CD8-positive, alpha-beta memory T cell (primary cell): ENCODE measurements at regions of chr16 and their contacts with region 1.

Region 1: DNA sequence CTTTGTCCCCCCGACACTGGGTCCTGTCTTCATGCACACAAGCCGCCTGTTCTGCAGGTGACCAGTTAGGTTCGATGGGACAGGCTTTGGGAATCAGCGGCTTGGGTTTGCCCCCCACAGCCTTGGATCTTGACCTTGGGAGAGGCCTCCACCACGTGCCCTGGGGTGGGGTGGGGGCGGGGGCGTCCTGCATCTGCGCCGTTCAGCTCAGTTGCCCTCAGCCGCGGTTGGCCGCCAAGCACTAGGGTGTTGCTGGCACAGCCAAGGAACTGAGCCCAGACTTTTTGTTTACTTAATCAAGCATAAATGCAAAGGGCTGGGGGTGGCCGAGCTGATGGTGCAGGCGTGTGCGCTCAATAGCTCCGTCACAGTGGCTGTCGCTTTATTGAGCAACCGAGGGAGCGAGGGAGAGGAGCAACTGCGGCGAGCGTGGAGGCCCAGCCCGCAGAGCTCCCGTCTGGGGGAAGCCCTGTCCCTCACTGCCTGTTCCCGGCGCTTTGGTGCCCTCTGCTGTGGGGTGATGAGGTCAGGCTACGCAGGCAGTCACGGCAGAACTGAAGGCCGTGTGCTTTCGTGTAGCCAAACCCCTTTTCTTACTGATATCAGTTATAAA is 33.9 kb downstream of the JPH3 start:
- DNase-seq: peak; percentile 70 to 86 (median 74)
- H3K4me3 ChIP-seq: peak overlapping the region; percentile 61
- H3K4me3 Mint-ChIP-seq: peak overlapping the region; percentile 69 to 92 (median 88)
- H3K27ac ChIP-seq: no peak overlapping the region
- H3K27ac Mint-ChIP-seq: peak overlapping the region; percentile 61 to 98 (median 85)
- H3K4me1 ChIP-seq: peaks cover 18% of the 10 kb centered on the region
- H3K4me1 Mint-ChIP-seq: peaks cover 9 to 19% (median 15%) of the 10 kb centered on the region in 3 donors
- H3K27me3 ChIP-seq: no peaks in the 10 kb centered on the region
- H3K27me3 Mint-ChIP-seq: peaks cover 8 to 11% of the 10 kb centered on the region in 2 donors

Region 2: GRCh38 chr16:86563489-86564345 is 1072.5 kb before region 1 on chr16:
- CTCF ChIA-PET with region 1: interaction called, 10 read pairs
- POLR2A ChIA-PET with region 1: no interaction called
- DNase-seq: peak; percentile 77 to 89 (median 80)
- H3K4me3 ChIP-seq: peak overlapping the region; percentile 24
- H3K4me3 Mint-ChIP-seq: peak overlapping the region; percentile 31 to 85 (median 70)
- H3K27ac ChIP-seq: no peak overlapping the region
- H3K27ac Mint-ChIP-seq: peak overlapping the region in 3 of 8 donors; percentile 28 to 76 (median 44)
- H3K4me1 ChIP-seq: peaks cover 11% of the 10 kb centered on the region
- H3K4me1 Mint-ChIP-seq: peaks cover 16 to 35% (median 18%) of the 10 kb centered on the region in 3 donors
- H3K27me3 ChIP-seq: peaks cover 32% of the 10 kb centered on the region
- H3K27me3 Mint-ChIP-seq: peaks cover 48 to 71% of the 10 kb centered on the region in 2 donors

Region 3: DNA sequence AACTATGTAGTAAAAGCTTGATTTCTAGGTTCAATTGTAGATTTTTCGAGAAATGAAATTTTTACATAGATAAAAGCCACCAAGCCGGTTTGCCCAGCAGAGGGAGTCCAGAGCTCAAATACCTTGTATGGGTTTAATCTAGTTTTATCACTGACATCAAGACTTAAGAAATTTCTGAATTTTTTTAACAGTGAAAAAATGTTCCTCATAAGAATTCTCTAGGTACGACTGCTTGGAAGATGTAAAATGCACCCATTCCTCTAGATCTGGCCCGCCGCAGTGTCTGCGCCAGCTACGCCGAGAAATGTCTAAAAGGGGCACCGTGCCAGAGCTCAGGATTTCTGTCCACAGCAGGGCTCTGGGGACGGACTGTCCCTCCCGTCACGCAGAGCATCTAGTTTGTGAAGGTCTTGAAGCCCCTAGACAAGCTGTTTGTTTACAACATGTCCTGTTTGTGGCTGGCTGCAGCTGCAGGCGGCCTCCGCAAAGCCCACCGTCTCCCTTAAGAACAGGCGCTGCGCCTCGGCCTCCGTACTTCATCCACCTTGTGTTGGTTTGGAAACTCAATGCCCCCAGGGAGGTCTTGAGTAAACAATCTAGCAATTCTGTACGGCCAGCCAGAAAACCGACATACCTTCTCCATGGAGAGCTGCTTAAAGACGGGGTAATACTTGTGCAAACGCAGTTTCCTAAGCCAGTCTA is 219.2 kb before region 1 on chr16:
- CTCF ChIA-PET with region 1: interaction called, 14 read pairs
- POLR2A ChIA-PET with region 1: no interaction called
- DNase-seq: peak in 1 of 5 donors; percentile 32
- H3K4me3 ChIP-seq: no peak overlapping the region
- H3K4me3 Mint-ChIP-seq: no peak overlapping the region
- H3K27ac ChIP-seq: no peak overlapping the region
- H3K27ac Mint-ChIP-seq: no peak overlapping the region
- H3K4me1 ChIP-seq: no peaks in the 10 kb centered on the region
- H3K4me1 Mint-ChIP-seq: no peaks in the 10 kb centered on the region
- H3K27me3 ChIP-seq: no peaks in the 10 kb centered on the region
- H3K27me3 Mint-ChIP-seq: no peaks in the 10 kb centered on the region

Region 4: DNA sequence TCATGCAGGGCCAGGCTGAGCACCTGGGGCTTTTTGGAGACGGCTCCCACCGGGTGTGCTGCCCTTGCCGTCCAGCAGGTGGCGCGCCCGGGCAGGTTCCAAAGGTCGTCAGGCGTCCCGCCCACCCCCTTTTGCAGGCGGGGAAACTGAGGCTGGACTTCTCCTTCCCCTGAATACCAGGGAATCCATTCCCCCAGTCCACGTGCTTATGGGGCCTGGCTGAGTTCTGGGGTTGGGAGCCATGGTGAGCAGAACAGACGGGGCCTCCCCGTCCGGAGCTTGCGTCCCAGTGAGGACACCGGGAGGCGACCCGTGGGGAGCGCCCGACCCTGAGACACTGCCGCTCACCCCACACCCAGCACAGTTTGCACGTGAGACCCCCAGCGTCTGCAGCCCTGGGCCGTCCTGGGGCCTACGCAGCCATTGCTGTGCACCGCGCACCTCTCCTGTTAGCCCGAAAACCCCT is 85.6 kb before region 1 on chr16:
- CTCF ChIA-PET with region 1: interaction called, 30 read pairs
- POLR2A ChIA-PET with region 1: no interaction called
- DNase-seq: peak; percentile 41 to 62 (median 53)
- H3K4me3 ChIP-seq: no peak overlapping the region
- H3K4me3 Mint-ChIP-seq: no peak overlapping the region
- H3K27ac ChIP-seq: no peak overlapping the region
- H3K27ac Mint-ChIP-seq: no peak overlapping the region
- H3K4me1 ChIP-seq: no peaks in the 10 kb centered on the region
- H3K4me1 Mint-ChIP-seq: peaks cover 0 to 6% (median 5%) of the 10 kb centered on the region in 3 donors
- H3K27me3 ChIP-seq: no peaks in the 10 kb centered on the region
- H3K27me3 Mint-ChIP-seq: peaks cover 11 to 48% of the 10 kb centered on the region in 2 donors

Region 5: GRCh38 chr16:87664792-87665191 is 28.6 kb after region 1 on chr16:
- CTCF ChIA-PET with region 1: no interaction called
- POLR2A ChIA-PET with region 1: no interaction called
- DNase-seq: no peak
- H3K4me3 ChIP-seq: no peak overlapping the region
- H3K4me3 Mint-ChIP-seq: no peak overlapping the region
- H3K27ac ChIP-seq: no peak overlapping the region
- H3K27ac Mint-ChIP-seq: no peak overlapping the region
- H3K4me1 ChIP-seq: no peaks in the 10 kb centered on the region
- H3K4me1 Mint-ChIP-seq: peaks cover 0 to 2% (median 0%) of the 10 kb centered on the region in 3 donors
- H3K27me3 ChIP-seq: peaks cover 4% of the 10 kb centered on the region
- H3K27me3 Mint-ChIP-seq: peaks cover 12 to 19% of the 10 kb centered on the region in 2 donors

Region 6: DNA sequence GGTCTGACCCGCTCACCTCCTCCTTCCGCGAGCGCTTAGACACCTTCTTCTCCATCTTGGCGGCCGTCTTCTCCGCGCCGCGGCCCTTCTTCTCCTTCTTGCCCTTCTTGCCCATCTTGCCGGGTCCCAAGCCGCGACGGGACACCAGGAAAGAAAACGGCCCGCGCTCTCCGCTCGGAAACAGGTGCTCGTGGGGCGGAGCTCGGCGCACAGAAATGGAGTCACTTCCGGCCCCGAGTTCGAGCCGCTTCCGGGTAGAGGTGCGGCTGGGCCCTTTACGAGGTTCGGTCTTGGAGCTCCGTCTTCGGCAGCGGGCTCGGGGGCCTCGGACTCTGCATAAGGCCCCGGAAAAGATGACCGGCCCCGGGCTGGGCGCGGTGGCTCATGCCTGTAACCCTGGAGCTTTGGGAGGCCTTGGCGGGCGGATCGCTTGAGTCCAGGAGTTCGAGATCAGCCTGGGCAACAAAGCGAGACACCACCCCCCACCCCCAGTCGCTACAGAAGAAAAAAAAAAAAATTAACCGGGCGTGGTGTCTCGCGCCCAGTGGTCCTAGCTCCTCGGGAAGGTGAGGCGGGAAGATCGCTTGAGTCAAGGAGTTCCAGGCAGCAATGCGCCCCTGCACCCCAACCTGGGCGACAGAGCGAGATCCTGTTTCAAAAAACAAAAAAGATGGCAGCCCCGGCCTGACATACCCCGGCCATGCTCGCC is 129.8 kb after region 1 on chr16 and contains the start of gene KLHDC4:
- CTCF ChIA-PET with region 1: interaction called, 19 read pairs
- POLR2A ChIA-PET with region 1: no interaction called
- DNase-seq: peak; percentile 84 to 92 (median 86)
- H3K4me3 ChIP-seq: peak within 1 kb of the TSS; percentile 89
- H3K4me3 Mint-ChIP-seq: peak within 1 kb of the TSS; percentile 95 to 100 (median 96)
- H3K27ac ChIP-seq: peak within 1 kb of the TSS; percentile 93
- H3K27ac Mint-ChIP-seq: peak within 1 kb of the TSS; percentile 95 to 100 (median 99)
- H3K4me1 ChIP-seq: peaks cover 43% of the 10 kb centered on the region
- H3K4me1 Mint-ChIP-seq: peaks cover 46 to 51% (median 51%) of the 10 kb centered on the region in 3 donors
- H3K27me3 ChIP-seq: no peaks in the 10 kb centered on the region
- H3K27me3 Mint-ChIP-seq: peaks cover 0 to 2% of the 10 kb centered on the region in 2 donors
- total RNA-seq, gene KLHDC4: 71.5 to 77.3 TPM